Activated B cell treated with CpG ODN at 0.5 μM for 24 hours (primary cell): ENCODE measurements at regions of chr20 and their contacts with region 1.

Region 1: DNA sequence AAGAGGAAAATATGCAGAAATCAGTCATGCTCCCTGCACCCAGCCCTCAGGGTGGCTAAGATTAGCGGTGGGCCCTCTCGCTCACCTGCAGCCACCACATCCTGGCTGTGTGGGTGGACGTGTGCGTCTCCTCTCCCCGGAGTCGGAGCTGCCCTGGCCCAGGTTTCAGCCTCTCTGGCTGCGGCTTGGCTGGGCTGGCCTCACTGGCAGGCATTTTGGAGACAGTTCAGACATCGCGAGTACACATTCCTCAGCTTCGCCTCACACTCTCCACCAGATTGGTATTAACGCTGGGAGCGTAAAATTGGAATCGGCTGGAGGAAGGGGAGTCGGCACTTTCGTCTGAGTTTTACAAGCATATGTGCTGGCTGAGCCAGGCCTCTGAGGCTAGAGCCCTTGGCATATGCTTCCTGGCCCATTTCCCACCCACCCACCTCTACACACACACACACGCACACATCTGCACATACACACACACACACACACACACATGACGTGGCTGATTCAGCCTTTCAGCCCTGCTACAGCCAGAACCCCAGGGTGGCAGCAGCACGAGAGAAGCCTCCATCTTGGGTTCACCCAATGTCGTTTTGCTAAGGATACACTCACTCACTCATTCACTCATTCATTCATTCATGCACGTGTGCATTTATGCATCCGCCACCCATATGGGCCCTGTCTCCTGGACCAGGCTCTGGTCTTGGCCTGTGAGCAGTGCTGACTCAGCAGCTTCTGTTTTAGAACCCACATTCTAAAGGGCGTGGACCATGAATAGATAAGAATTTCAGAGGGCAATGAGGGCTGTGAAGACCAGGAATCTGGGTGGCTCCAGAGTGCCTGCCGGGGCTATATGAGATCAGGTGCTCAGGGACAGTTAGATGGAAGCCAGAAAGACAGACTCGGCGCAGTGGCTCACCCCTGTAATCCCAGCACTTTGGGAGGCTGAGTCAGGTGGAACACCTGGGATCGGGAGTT is 43.0 kb downstream of the BCAS4 start:
- DNase-seq: no peak
- ATAC-seq: peak; percentile 86
- H3K4me3 Mint-ChIP-seq: peak overlapping the region; percentile 53
- H3K27ac Mint-ChIP-seq: peak overlapping the region; percentile 85
- H3K4me1 Mint-ChIP-seq: peaks cover 27% of the 10 kb centered on the region
- H3K27me3 Mint-ChIP-seq: no peaks in the 10 kb centered on the region
- CTCF ChIP-seq: no peak

Region 2: GRCh38 chr20:50824193-50824632 is 13.6 kb before region 1 on chr20:
- CTCF ChIA-PET with region 1: interaction called, 3 read pairs
- POLR2A ChIA-PET with region 1: interaction called, 19 read pairs
- intact Hi-C with region 1: loop called (anchors 1 kb)
- DNase-seq: no peak
- ATAC-seq: no peak
- H3K4me3 Mint-ChIP-seq: no peak overlapping the region
- H3K27ac Mint-ChIP-seq: peak overlapping the region; percentile 71
- H3K4me1 Mint-ChIP-seq: peaks cover 55% of the 10 kb centered on the region
- H3K27me3 Mint-ChIP-seq: no peaks in the 10 kb centered on the region
- CTCF ChIP-seq: no peak

Region 3: GRCh38 chr20:50913690-50914375 is 76.0 kb after region 1 on chr20:
- CTCF ChIA-PET with region 1: no interaction called
- POLR2A ChIA-PET with region 1: interaction called, 13 read pairs
- intact Hi-C with region 1: no loop called
- DNase-seq: no peak
- ATAC-seq: no peak
- H3K4me3 Mint-ChIP-seq: no peak overlapping the region
- H3K27ac Mint-ChIP-seq: peak overlapping the region; percentile 30
- H3K4me1 Mint-ChIP-seq: peaks cover 82% of the 10 kb centered on the region
- H3K27me3 Mint-ChIP-seq: no peaks in the 10 kb centered on the region
- CTCF ChIP-seq: no peak